GM12878 (cell line): ENCODE measurements at regions of chr3 and their contacts with region 1.

Region 1: DNA sequence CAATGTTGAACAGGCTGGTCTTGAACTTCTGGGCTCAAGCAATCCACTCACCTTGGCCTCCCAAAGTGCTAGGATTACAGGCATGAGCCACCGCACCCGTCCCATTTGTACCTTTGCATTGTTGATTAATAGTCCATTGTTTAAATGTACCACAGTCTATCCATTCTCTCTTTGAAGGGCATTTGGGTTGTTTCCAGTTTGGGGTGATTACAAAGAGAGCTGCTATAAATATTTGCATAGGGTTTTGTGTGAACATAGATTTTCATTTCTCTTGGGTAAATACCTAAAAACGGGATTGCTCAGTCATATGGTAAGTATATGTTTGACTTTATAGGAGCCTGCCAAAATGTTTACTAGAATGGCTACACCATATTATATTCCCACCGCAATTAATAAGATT is 13.7 kb upstream of the PTPRG start:
- DNase-seq: no peak
- ATAC-seq: peak; percentile 84
- H3K4me3 ChIP-seq: no peak overlapping the region
- H3K27ac ChIP-seq: no peak overlapping the region
- H3K4me1 ChIP-seq: no peaks in the 10 kb centered on the region
- H3K27me3 ChIP-seq: no peaks in the 10 kb centered on the region
- CTCF ChIP-seq: no peak
- EP300 ChIP-seq: peak in 1 of 2 experiments; percentile 70; a peak in 1 of 4 replicates
- POLR2A ChIP-seq: no peak
- RAD21 ChIP-seq: no peak

Region 2: GRCh38 chr3:61157414-61157813 is 390.2 kb before region 1 on chr3:
- CTCF ChIA-PET with region 1: no interaction called
- POLR2A ChIA-PET with region 1: no interaction called
- RAD21 ChIA-PET with region 1: no interaction called
- SMC1A ChIA-PET with region 1: no interaction called
- in situ Hi-C with region 1: no loop called
- intact Hi-C with region 1: no loop called
- DNase-seq: peak; percentile 21
- ATAC-seq: peak; percentile 91
- H3K4me3 ChIP-seq: no peak overlapping the region
- H3K27ac ChIP-seq: no peak overlapping the region
- H3K4me1 ChIP-seq: no peaks in the 10 kb centered on the region
- H3K27me3 ChIP-seq: no peaks in the 10 kb centered on the region
- CTCF ChIP-seq: no peak
- EP300 ChIP-seq: no peak
- POLR2A ChIP-seq: no peak
- RAD21 ChIP-seq: no peak

Region 3: DNA sequence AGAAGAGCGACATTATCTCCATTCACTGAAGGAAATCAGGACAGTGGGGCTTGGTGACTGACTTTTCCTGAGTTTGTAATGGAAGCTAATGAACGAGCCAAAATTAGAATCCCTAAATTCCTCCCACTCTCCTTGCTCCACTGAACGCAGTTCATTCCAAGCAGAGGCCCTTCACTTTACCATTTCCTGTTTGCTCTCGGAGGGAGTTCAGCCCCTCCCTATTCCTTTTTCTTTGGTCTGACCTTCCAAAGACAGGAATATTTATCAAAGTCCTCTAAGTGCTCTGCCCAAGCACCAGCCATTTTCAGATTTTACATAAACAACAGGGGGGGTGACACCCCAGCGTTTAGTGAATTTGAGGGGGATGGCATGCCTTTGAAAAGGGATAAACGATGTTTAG is 10.3 kb before region 1 on chr3:
- CTCF ChIA-PET with region 1: interaction called, 36 read pairs
- POLR2A ChIA-PET with region 1: no interaction called
- RAD21 ChIA-PET with region 1: no interaction called
- SMC1A ChIA-PET with region 1: interaction called, 18 read pairs
- in situ Hi-C with region 1: no loop called
- intact Hi-C with region 1: no loop called
- DNase-seq: no peak
- ATAC-seq: no peak
- H3K4me3 ChIP-seq: no peak overlapping the region
- H3K27ac ChIP-seq: no peak overlapping the region
- H3K4me1 ChIP-seq: no peaks in the 10 kb centered on the region
- H3K27me3 ChIP-seq: no peaks in the 10 kb centered on the region; a peak in 1 of 4 replicates
- CTCF ChIP-seq: no peak
- EP300 ChIP-seq: no peak
- POLR2A ChIP-seq: no peak
- RAD21 ChIP-seq: no peak

Region 4: DNA sequence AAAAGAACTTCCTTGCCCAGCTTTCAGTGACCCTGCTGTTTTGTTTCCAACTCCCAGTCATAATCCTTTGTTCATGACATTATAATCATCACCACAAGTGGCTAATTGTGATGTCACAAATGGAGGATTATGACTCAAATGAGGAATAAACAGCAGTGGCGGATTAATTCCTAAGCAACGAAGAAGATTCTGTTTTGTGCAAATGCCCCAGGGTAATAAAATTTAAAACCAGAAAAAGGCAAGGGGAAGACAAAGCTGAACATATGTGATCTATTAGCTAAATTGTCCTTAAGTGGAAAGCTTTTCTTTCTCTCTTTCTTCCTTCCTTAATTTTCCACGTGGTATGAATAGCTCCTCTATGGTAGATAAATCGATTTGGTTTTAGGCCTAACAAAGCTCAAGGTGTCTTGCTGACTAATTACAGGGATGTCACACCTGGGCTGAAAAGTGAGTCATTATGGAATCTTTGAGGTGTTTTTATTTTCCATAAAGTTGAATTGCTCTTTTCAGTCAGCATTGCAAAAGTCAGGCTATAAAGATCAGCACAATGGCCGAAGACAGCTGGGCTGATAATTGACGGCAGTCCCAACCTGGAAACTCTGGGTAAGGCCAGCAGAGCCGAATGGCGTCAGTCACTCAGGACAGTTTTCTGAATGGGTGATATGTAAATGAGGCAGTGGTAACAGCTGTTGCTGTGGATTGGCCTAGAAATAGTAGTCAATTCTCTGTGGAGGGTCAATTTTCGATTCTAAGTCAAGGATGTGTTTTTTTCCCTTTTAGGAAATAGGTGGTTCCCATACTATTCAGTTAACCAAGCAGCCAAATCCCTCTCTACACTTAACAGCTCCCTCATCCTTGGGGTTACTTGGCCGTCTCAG is 135.3 kb after region 1 on chr3:
- CTCF ChIA-PET with region 1: no interaction called
- POLR2A ChIA-PET with region 1: no interaction called
- RAD21 ChIA-PET with region 1: no interaction called
- SMC1A ChIA-PET with region 1: no interaction called
- in situ Hi-C with region 1: no loop called
- intact Hi-C with region 1: no loop called
- DNase-seq: no peak
- ATAC-seq: peak; percentile 57
- H3K4me3 ChIP-seq: no peak overlapping the region
- H3K27ac ChIP-seq: no peak overlapping the region
- H3K4me1 ChIP-seq: no peaks in the 10 kb centered on the region
- H3K27me3 ChIP-seq: no peaks in the 10 kb centered on the region; a peak in 1 of 4 replicates
- CTCF ChIP-seq: no peak
- EP300 ChIP-seq: 0 out of 4 replicates have a peak, but pooled peaks of 1 of the 2 experiments have one; percentile 51
- POLR2A ChIP-seq: no peak
- RAD21 ChIP-seq: no peak